Activated naive CD4-positive, alpha-beta T cell treated with anti-CD3 and anti-CD28 coated beads for 36 hours (primary cell): ENCODE measurements at regions of chr21 and their contacts with region 1.

Region 1: DNA sequence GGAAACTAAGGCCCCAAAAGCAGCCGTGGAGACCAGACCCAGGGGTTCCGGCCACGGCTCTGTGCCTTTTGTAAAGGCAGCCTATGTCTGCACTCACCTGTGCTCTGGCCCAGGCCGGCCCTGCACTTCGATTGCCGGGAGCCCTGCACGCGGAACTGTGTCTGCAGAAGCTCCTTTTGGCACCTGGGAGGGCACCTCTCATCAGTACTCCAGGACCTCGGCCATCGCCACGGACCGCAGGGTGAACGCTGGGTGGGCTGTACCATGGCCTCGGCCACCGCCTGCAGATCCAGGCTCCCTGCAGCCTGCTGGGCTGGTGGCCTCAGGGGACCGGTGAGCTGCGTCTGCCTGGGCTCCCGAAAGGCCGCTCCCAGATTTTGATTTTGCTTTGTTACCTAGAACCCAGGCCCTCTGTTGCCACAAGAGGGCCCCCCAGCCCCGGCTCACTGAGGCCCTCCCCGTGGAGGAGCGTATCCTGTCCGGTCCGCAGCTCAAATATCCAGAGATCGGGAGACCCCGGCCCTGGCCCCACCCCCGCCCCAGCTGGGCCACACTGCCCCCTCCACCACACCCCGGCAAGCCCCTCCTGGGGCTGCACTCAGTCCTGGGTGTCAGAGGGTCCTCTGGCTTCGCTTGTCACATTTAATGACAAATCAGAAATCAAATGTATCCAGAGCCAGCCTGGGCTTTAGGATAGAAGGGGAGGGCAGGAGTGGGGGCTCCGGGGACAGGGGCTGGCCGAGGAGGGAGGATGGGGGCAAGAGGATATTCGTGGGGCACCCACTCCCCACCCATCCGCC is 60.2 kb upstream of the PDE9A start:
- DNase-seq: peak; percentile 83
- H3K4me3 Mint-ChIP-seq: no peak overlapping the region
- H3K27ac Mint-ChIP-seq: no peak overlapping the region
- H3K4me1 Mint-ChIP-seq: peaks cover 11% of the 10 kb centered on the region
- H3K27me3 Mint-ChIP-seq: no peaks in the 10 kb centered on the region

Region 2: DNA sequence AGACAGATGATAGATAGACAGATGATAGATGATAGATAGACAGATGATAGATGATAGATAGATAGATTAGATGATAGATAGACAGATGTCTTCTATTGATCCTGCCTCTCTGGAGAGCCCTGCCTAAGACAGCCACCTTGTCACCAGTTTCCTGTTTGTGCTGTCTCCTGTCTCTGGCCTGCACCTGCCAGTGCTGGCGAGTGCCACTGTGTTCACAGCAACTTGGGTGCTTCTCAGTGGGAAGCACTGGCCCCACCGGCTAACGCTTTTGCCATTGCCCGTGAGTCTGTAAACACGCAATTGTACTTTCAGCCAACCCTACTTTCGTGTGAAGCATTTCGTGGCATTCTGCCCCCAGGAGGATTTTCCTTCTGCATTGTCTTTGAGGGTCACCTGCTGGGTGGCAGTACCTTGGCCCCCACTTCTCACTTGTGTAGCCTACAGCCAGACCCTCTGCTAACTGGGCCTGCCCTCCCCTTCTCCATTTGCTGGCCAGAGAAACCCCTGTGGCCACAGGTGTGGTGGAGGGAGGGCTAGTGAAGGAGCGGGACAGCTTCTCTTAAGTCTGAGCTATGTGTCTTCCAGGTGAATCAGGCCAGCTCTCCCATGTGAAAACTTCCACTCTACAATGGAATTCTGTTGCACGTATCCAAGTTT is 36.9 kb after region 1 on chr21:
- CTCF ChIA-PET with region 1: interaction called, 6 read pairs
- intact Hi-C with region 1: loop called (anchors 5 kb)
- DNase-seq: no peak
- H3K4me3 Mint-ChIP-seq: no peak overlapping the region
- H3K27ac Mint-ChIP-seq: no peak overlapping the region
- H3K4me1 Mint-ChIP-seq: peaks cover 3% of the 10 kb centered on the region
- H3K27me3 Mint-ChIP-seq: no peaks in the 10 kb centered on the region

Region 3: DNA sequence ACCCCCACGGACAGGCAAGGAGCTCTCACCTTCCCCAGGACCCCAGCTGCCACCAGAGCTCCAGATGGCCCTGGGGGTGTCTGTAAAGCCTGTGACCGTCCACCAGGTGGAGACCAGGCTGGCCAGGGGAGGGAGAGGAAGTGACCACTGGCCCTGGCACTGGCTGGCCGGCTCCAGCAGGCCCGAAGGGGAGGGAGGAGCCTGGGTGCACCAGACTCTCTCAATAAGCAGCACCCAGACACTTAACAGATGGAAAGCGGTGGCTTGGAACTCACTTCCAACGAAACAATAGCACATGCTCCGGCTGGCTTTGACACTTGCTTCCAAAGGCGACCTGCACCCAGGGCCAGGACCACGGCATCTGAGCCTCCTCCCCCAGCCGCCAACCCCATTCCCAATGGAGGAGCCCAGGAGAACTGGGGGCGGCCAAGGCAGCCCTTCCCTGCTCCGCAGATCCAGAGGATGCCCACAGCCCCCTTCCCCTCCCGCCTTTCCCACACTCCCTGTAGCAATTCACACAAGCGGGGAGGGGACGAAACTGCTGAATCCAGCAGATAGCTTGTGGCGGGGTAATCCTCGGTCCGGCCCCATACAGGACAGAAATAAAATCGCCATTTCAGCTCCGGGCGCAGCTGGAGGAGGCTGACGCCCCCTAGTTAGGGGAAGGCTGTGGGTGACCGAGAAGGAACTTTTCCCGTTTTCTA is 59.5 kb after region 1 on chr21:
- CTCF ChIA-PET with region 1: interaction called, 4 read pairs
- intact Hi-C with region 1: loop called (anchors 5 kb)
- DNase-seq: no peak
- H3K4me3 Mint-ChIP-seq: peak overlapping the region; percentile 70
- H3K27ac Mint-ChIP-seq: no peak overlapping the region
- H3K4me1 Mint-ChIP-seq: peaks cover 20% of the 10 kb centered on the region
- H3K27me3 Mint-ChIP-seq: no peaks in the 10 kb centered on the region

Region 4: GRCh38 chr21:42746593-42747275 is 153.5 kb after region 1 on chr21:
- CTCF ChIA-PET with region 1: interaction called, 5 read pairs
- intact Hi-C with region 1: loop called (anchors 5 kb)
- DNase-seq: peak; percentile 57
- H3K4me3 Mint-ChIP-seq: peak overlapping the region; percentile 18
- H3K27ac Mint-ChIP-seq: peak overlapping the region; percentile 79
- H3K4me1 Mint-ChIP-seq: peaks cover 13% of the 10 kb centered on the region
- H3K27me3 Mint-ChIP-seq: no peaks in the 10 kb centered on the region

Region 5: DNA sequence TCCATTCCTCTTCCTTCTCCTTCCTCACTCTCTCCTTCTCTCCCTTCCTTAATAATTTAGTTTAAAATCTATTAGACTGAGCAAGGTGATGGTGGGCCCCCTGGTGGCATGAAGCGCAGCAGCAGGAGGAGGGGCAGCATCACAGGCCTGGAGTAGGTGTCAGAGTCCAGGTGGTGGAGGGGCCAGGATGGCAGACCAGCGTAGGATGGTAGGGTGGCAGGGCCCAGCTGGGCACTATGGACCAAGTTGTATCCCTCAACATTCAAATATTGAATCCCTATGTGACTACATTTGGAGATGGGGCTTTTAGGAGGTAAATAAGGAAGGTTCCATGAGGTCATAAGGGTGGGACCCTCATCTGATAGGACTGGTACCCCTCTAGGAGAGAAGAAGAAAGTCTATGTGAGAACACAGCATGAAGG is 225.1 kb after region 1 on chr21:
- CTCF ChIA-PET with region 1: interaction called, 26 read pairs
- intact Hi-C with region 1: loop called (anchors 5 kb)
- DNase-seq: peak; percentile 77
- H3K4me3 Mint-ChIP-seq: no peak overlapping the region
- H3K27ac Mint-ChIP-seq: no peak overlapping the region
- H3K4me1 Mint-ChIP-seq: no peaks in the 10 kb centered on the region
- H3K27me3 Mint-ChIP-seq: no peaks in the 10 kb centered on the region